CD8-positive, alpha-beta T cell (primary cell): ENCODE measurements at regions of chr3 and their contacts with region 1.

Region 1: DNA sequence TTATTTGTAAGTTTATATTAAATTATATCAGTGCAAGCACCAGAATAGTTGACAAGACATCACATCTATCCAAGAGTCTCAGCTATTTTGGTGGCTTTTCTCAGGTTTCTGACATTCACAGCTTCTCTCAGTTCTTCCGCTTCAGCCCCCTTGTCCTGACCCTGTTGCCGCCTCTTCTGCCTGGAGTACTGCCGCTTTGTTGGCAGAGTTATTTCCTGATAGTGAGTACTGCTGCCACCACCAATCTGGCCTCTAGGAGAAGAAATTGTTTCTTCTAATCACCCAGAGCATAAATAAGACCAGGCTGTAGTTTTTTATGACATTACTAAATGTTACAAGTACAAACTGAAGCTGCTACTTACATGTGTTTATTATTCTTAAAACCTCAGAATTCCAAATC is 470.1 kb downstream of the NSUN3 start:
- DNase-seq: no peak
- ATAC-seq: no peak
- H3K4me3 ChIP-seq: no peak overlapping the region
- H3K4me3 Mint-ChIP-seq: no peak overlapping the region
- H3K27ac ChIP-seq: no peak overlapping the region
- H3K27ac Mint-ChIP-seq: no peak overlapping the region
- H3K4me1 ChIP-seq: no peaks in the 10 kb centered on the region
- H3K4me1 Mint-ChIP-seq: no peaks in the 10 kb centered on the region
- H3K27me3 ChIP-seq: no peaks in the 10 kb centered on the region
- H3K27me3 Mint-ChIP-seq: no peaks in the 10 kb centered on the region
- CTCF ChIP-seq: no peak

Region 2: DNA sequence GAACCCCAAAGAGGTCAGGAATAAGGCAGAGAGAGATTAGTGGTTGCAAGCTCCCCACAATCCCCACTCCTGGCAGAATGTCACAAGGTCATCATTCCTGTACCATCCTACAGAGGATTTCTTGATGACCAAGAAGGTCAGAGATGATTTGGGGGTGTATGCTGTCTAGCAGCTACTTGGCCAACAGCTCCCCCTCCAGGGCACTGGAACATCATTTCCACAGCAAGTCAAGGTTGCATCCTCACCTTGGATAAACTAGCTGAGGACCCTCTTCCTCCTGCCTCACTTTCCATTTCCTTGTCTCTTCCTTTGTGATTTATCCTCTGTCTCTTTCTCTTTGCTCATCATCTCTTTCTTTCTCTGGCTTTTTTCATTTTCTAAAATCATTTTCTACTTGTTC is 665.5 kb before region 1 on chr3:
- CTCF ChIA-PET with region 1: no interaction called
- POLR2A ChIA-PET with region 1: no interaction called
- intact Hi-C with region 1: no loop called
- DNase-seq: no peak
- ATAC-seq: no peak
- H3K4me3 ChIP-seq: no peak overlapping the region
- H3K4me3 Mint-ChIP-seq: no peak overlapping the region
- H3K27ac ChIP-seq: no peak overlapping the region
- H3K27ac Mint-ChIP-seq: no peak overlapping the region
- H3K4me1 ChIP-seq: no peaks in the 10 kb centered on the region
- H3K4me1 Mint-ChIP-seq: no peaks in the 10 kb centered on the region
- H3K27me3 ChIP-seq: no peaks in the 10 kb centered on the region
- H3K27me3 Mint-ChIP-seq: no peaks in the 10 kb centered on the region
- CTCF ChIP-seq: no peak

Region 3: DNA sequence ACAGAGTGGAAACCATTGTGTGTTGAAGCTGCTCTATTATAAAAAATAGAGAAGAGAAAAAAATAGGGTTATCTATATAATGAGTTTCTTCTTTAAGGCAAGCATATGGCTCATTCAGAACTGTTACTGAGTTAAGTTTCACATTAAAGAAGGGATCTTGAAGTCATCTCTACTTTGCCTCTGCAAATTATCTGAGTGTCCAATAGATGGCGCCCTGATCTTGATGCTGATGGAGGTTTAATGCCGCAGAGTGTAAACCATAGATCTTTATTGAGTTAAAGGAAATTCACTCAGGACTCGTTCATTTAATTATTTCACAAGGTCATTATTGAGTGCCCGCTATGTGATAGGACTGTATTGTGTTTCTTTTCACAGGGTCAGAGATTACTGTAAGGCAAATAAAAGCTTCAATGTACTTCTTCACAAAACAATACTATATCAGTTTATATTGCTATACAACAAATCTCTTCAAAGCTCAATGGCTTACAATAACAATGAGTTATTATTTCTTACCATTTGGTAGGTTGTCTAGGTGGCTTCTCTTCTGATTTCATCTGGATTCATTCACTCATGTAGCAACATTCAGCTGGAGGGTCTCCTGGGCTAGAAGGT is 298.7 kb before region 1 on chr3:
- CTCF ChIA-PET with region 1: no interaction called
- POLR2A ChIA-PET with region 1: no interaction called
- intact Hi-C with region 1: no loop called
- DNase-seq: no peak
- ATAC-seq: no peak
- H3K4me3 ChIP-seq: no peak overlapping the region
- H3K4me3 Mint-ChIP-seq: no peak overlapping the region
- H3K27ac ChIP-seq: no peak overlapping the region
- H3K27ac Mint-ChIP-seq: no peak overlapping the region
- H3K4me1 ChIP-seq: no peaks in the 10 kb centered on the region
- H3K4me1 Mint-ChIP-seq: no peaks in the 10 kb centered on the region
- H3K27me3 ChIP-seq: no peaks in the 10 kb centered on the region
- H3K27me3 Mint-ChIP-seq: no peaks in the 10 kb centered on the region
- CTCF ChIP-seq: no peak

Region 4: DNA sequence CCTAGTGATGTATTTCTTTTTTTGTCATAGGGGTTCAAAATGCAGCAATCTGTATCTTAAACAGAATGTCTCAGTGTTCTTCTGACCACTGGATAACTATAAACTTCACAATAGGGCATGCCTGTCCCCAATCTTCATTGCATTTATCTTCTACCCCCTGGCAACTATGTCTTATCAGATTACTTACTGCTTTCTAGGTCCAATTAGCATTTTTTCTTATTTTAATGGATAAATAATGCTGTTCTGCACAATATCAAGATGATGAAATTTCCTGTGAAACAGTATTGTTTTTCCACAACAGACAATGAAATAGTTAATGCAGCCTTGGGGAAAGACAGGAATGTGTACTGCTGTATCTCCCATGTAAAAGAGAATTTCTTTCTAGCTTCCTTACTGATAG is 38.0 kb before region 1 on chr3:
- CTCF ChIA-PET with region 1: no interaction called
- POLR2A ChIA-PET with region 1: no interaction called
- intact Hi-C with region 1: no loop called
- DNase-seq: no peak
- ATAC-seq: no peak
- H3K4me3 ChIP-seq: no peak overlapping the region
- H3K4me3 Mint-ChIP-seq: no peak overlapping the region
- H3K27ac ChIP-seq: no peak overlapping the region
- H3K27ac Mint-ChIP-seq: no peak overlapping the region
- H3K4me1 ChIP-seq: no peaks in the 10 kb centered on the region
- H3K4me1 Mint-ChIP-seq: no peaks in the 10 kb centered on the region
- H3K27me3 ChIP-seq: no peaks in the 10 kb centered on the region
- H3K27me3 Mint-ChIP-seq: no peaks in the 10 kb centered on the region
- CTCF ChIP-seq: no peak

Region 5: DNA sequence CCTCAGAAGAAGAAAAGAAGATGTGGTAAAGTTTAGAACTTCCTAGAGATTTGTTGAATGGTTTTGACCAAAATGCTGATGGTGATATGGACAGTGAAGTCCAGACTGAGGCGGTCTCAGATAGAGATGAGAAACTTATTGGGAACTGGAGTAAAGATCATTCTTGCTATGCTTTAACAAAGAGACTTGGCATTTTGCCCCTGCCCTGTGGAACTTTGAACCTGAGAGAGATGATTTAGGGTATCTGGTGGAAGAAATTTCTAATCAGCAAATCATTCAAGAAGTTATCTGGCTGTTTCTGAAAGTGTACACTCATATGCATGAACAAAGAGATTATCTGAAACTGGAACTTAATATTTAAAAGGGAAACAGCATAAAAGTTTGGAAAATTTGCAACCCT is 35.1 kb after region 1 on chr3:
- CTCF ChIA-PET with region 1: no interaction called
- POLR2A ChIA-PET with region 1: no interaction called
- intact Hi-C with region 1: loop called in 1 of 2 experiments (anchors 1 kb)
- DNase-seq: no peak
- ATAC-seq: no peak
- H3K4me3 ChIP-seq: no peak overlapping the region
- H3K4me3 Mint-ChIP-seq: no peak overlapping the region
- H3K27ac ChIP-seq: no peak overlapping the region
- H3K27ac Mint-ChIP-seq: no peak overlapping the region
- H3K4me1 ChIP-seq: no peaks in the 10 kb centered on the region
- H3K4me1 Mint-ChIP-seq: no peaks in the 10 kb centered on the region
- H3K27me3 ChIP-seq: no peaks in the 10 kb centered on the region
- H3K27me3 Mint-ChIP-seq: no peaks in the 10 kb centered on the region
- CTCF ChIP-seq: no peak